ENCODE measurements at regions of chr2 and their contacts with region 1.

Region 1: DNA sequence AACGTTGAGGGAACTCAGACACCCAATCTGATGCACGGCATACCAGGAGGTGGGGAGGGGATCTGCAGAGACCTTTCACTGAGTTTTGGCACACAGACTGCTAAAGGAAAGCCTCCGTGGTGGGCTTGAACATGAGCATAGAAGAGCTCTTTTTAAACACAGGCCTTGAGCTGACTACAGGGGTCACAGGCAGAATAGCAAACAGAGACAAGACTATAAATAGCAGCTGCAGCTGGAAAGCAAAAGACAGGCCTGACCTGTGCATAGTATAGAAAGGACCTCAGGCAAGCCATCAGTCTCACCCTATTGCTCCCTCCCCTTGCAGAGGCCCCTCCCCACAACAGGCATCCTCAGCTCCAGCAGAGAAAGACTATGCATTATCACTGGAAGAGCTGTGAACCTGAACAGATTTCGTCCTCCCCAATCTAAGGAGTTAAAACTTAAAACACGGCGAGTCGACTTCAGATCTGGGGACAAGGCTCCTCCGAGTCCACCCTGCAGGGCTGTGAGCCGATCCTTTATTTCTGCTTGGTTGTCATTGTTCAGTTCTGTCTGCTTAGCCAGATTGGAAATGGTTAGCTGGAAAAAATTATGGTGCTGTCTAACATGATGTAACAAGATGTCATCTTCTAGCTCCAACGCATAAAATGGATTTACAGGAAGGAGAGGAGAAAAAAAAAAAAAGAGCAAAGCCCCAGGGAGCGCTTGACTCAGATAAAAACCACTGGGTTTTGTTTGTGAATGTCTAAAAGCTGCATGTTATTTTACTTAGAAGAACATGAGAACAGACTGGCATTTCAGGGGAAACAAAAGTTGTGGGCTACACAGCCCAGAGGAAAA is 25.2 kb upstream of the LCLAT1 start:
- DNase-seq: no peak
- H3K4me3 Mint-ChIP-seq: peak overlapping the region; percentile 63
- H3K27ac Mint-ChIP-seq: peak overlapping the region; percentile 86
- H3K4me1 Mint-ChIP-seq: peaks cover 29% of the 10 kb centered on the region
- H3K27me3 Mint-ChIP-seq: no peaks in the 10 kb centered on the region

Region 2: GRCh38 chr2:30146438-30147147 is 275.2 kb before region 1 on chr2 and contains the start of gene YPEL5:
- intact Hi-C with region 1: loop called (anchors 10 kb)
- DNase-seq: peak; percentile 99
- H3K4me3 Mint-ChIP-seq: peak within 1 kb of the TSS; percentile 77
- H3K27ac Mint-ChIP-seq: peak within 1 kb of the TSS; percentile 92
- H3K4me1 Mint-ChIP-seq: peaks cover 34% of the 10 kb centered on the region
- H3K27me3 Mint-ChIP-seq: no peaks in the 10 kb centered on the region
- total RNA-seq, gene YPEL5: 24.1 and 27.8 TPM in 2 replicates

Region 3: DNA sequence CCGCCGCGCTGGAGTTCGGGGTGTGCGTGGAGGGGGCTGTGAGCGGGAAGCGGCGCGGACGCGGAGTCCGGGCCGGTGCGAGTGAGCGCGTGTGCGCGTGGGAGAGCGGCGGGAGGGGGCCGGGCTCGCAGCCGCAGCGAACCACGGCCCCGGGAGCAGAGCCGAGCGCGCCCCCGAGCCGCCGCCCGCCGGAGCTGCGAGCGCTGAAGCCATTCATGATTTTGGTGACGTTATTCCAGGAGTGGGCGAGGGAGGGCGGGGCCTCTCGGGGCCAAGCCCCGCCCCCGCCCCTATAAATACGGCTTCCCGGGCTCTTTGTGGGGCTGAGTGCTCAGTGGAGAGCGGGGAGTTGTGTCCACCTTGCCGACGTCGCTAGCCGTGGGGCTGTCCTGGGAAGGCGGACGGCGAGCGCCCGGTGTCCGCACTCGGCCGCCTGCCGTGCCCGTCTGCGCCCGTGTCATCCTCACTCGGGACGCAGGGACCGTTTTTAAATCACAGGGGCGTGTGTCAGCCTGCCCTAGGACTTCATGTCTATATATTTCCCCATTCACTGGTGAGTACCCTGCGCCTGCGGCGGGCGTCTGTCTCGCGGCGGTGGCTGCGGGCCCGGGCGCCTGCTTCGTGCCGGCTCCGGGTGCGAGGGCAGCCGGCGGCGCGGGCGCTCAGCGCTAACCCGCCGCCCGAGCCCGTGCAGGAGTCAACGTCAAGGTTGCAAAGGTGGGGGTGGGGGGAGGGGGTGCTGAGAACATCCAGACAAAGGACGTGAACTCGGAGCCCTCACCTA is 190.4 kb before region 1 on chr2 and contains the start of gene LBH:
- intact Hi-C with region 1: loop called (anchors 1 kb)
- DNase-seq: peak; percentile 70
- H3K4me3 Mint-ChIP-seq: peak within 1 kb of the TSS; percentile 84
- H3K27ac Mint-ChIP-seq: peak within 1 kb of the TSS; percentile 79
- H3K4me1 Mint-ChIP-seq: peaks cover 50% of the 10 kb centered on the region
- H3K27me3 Mint-ChIP-seq: peaks cover 4% of the 10 kb centered on the region
- total RNA-seq, gene LBH: 60.8 and 61.1 TPM in 2 replicates

Region 4: DNA sequence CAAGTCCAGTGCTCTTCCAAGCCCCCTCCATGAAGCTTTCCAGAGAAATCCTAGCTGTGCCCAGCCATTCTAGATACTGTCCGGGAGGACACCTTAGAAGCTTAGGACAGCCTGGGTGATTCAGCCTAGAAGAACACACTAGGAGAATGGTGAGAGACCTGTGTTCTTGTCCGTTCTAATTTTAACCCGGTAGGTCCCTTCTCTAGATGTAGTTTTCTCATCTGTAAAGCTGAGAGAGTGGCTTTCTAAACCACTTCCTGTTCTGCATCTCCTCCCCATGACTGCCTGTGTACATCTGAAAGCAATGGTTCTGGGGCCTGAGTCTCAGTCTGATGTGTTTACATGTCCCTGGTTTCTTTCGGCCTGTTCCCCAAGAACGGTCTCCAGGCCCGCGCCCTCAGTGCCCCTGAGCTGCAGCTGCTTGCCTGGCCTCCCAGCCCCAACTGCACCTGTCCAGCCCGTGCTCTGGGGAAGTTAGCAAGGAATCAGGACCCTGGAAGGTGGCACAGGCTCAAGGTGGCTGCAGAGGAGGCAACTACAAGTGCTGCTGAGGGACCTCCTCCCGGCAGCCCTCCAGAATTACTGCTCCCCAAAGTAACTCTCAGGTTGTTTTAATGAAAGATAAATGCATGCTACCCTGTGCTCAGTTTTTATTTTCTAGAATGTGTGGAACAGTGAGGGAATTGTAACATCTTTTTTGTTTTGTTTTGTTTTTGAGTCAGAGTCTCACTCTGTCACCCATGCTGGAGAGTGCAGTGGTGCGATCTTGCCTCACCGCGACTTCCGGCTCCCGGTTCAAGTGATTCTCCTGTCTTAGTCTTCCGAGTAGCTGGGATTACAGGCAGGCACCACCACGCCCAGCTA is 84.6 kb before region 1 on chr2:
- intact Hi-C with region 1: loop called (anchors 1 kb)
- DNase-seq: peak; percentile 59
- H3K4me3 Mint-ChIP-seq: peak overlapping the region; percentile 41
- H3K27ac Mint-ChIP-seq: peak overlapping the region; percentile 93
- H3K4me1 Mint-ChIP-seq: peaks cover 83% of the 10 kb centered on the region
- H3K27me3 Mint-ChIP-seq: no peaks in the 10 kb centered on the region

Region 5: DNA sequence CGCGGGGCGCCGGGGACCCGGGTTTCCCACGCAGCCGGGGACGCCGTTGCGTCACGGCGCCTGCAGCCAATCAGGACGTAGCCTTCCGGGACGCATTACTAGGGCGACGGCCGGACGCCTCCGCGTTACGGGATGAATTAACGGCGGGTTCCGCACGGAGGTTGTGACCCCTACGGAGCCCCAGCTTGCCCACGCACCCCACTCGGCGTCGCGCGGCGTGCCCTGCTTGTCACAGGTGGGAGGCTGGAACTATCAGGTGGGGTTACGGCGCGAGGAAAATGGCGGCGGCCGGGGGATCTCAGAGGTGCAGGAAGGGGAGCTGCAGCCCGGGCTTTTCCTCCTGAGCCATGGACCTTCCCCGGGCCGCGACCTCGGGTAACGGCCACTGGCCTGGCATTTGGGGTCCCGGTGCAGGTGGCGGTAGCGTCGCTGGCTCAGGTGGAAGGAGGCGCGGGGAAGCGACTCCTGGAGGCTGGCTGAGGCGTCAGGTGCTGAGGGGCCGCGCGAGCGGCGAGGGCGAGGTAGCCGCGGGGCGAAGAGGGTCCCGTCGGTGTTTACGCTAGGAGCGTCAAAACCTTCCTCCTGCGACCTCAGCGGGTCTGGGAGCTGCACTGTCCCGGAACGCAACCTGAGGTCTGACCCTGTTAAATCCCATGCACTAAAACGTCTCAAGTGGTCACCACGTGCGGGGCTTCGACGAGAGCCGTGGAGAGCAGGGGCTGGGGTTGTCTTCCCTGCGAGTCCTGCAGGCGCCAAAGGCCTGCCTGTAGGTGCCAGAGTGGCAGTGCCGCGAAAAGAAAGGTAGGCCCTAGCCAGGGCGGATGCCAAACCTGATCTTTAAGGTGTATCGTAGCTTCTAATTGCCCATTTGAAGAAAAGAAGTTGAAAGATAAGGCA is 25.6 kb after region 1 on chr2 and contains the start of gene LCLAT1:
- intact Hi-C with region 1: loop called (anchors 1 kb)
- DNase-seq: peak; percentile 81
- H3K4me3 Mint-ChIP-seq: peak within 1 kb of the TSS; percentile 94
- H3K27ac Mint-ChIP-seq: peak within 1 kb of the TSS; percentile 97
- H3K4me1 Mint-ChIP-seq: peaks cover 21% of the 10 kb centered on the region
- H3K27me3 Mint-ChIP-seq: no peaks in the 10 kb centered on the region
- total RNA-seq, gene LCLAT1: 24.6 and 28.9 TPM in 2 replicates

Measured in activated T-helper 2 cell treated with anti-CD3 and anti-CD28 coated beads, Interferon-gamma antibody, Interleukin-2, Interleukin-4, amounts not matched to agents 10 μg/mL and 5 μg/mL and 100 μg/mL, durations not matched to agents 14 hours and 24 hours and 36 hours (primary cell).